ENCODE measurements at regions of chr9 and their contacts with region 1.

Region 1: GRCh38 chr9:136354592-136355085 is 8.9 kb downstream of the DNLZ start:
- DNase-seq: no peak
- H3K4me3 ChIP-seq: no peak overlapping the region
- H3K27ac ChIP-seq: no peak overlapping the region
- H3K4me1 ChIP-seq: no peaks in the 10 kb centered on the region
- H3K27me3 ChIP-seq: no peaks in the 10 kb centered on the region; a peak in 2 of 7 replicates
- CTCF ChIP-seq: no peak
- EP300 ChIP-seq: no peak
- POLR2A ChIP-seq: no peak
- RAD21 ChIP-seq: no peak

Region 2: DNA sequence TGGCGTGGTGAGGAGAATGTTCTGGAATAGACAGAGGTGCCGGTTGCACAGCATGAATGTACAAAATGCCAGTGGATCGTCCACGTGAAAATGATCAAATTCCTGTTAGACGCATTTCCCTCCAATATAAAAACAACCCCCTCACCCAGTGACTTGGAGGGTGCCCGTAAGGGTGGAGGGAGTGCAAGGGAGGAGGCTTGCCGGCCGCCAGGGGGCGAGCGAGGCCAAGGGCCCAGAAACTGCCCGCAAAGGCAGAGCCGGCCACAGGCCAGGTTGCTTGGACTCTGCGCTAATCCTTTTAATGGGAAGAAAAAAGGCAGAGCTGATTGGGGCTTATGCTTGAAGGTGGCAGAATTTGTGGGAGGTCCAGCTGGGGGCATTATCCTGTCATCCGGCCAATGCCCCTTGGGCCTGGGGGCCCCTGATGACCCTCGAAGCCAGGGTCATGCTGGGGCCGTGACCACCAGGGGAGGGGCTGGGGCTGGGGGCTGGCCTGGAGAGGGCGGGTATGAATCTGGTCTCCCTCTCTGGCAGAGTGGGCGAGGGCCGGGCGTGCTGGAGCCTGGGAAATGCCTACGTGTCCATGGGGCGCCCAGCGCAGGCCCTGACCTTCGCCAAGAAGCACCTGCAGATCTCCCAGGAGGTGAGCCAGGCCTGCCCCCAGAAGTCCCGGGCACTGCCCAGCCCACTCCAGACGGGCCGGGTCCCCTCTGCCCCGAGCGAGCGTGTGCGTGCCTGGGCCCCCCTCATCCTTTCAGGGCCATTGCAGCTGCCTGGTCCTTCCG is 15.3 kb before region 1 on chr9:
- CTCF ChIA-PET with region 1: interaction called, 22 read pairs
- POLR2A ChIA-PET with region 1: interaction called, 137 read pairs
- DNase-seq: peak in 1 of 2 experiments; percentile 89
- H3K4me3 ChIP-seq: no peak overlapping the region
- H3K27ac ChIP-seq: no peak overlapping the region
- H3K4me1 ChIP-seq: peaks cover 0 to 9% (median 8%) of the 10 kb centered on the region in 4 experiments; a peak in 6 of 7 replicates
- H3K27me3 ChIP-seq: no peaks in the 10 kb centered on the region
- CTCF ChIP-seq: peak in 2 of 3 experiments; percentile 93 to 96; a peak in 3 of 4 replicates
- EP300 ChIP-seq: no peak
- POLR2A ChIP-seq: no peak
- RAD21 ChIP-seq: peak; percentile 76 to 82

Region 3: DNA sequence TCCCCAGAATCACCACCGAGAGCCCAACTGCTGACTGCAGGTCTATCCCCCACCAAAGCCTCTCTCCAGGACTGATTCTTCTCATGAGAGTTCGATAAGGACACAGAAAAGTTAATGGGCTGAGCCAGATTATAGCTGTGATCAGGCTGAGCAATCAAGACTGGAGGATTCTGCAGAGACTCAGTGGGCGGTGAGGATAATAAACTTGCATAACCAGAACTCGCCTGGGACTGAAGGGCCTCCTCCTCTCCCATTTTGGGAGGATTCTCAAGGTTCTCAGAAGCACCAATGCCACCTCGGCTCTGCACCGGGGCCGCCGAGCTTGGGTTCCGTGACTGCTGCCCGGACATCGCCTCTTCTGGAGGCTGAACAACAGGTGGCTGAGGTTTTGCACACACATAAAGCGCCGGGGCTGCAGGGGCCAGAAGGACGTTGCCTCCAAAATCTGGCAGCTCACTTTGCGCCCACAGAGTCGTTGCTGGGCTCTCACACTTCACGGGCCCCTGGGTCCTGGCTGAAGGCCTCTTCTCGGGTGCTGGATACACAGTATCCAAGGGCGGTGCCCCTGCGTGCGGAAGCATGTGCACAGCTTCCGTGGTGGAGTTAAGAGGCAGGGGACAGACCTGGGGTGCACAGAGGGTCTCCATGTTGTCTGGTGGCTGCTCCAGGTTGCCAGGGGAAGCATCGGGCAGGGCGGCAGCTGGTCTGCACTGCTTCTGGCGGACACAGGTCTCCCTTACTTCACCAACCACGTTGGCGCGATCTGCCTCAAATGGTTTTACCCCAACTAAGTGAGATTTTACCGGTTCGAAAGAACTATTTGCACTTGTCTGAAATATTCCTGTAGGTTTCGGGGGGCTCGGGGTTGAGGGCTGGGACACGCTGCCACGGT is 120.6 kb after region 1 on chr9:
- CTCF ChIA-PET with region 1: no interaction called
- POLR2A ChIA-PET with region 1: no interaction called
- DNase-seq: no peak
- H3K4me3 ChIP-seq: no peak overlapping the region
- H3K27ac ChIP-seq: no peak overlapping the region
- H3K4me1 ChIP-seq: no peaks in the 10 kb centered on the region
- H3K27me3 ChIP-seq: no peaks in the 10 kb centered on the region
- CTCF ChIP-seq: no peak
- EP300 ChIP-seq: no peak
- POLR2A ChIP-seq: no peak
- RAD21 ChIP-seq: no peak

Measured in H1 (cell line).